ENCODE measurements at regions of chr5 and their contacts with region 1.

Region 1: DNA sequence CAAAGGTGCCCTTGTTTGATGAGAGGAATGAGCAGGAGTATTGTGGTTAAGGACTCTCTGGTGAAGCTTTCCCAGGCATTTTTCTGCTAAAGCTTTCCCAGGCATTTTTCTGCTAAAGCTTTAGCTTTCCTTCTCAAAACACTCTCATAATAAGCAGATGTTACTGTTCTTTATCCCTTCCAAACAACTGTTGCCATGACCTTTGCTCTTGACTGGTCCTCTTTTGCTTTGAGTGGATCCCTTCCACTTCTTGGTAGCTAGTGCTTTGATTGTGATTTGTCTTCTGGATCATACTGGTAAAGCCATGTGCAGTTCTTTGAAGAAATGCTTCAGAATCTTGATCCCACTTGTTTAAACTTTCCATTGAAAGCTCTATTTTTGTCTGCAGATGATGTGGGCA is 85.8 kb downstream of the GPBP1 start:
- DNase-seq: no peak
- H3K4me3 Mint-ChIP-seq: no peak overlapping the region
- H3K27ac Mint-ChIP-seq: peak overlapping the region; percentile 51
- H3K4me1 Mint-ChIP-seq: peaks cover 26% of the 10 kb centered on the region
- H3K27me3 Mint-ChIP-seq: no peaks in the 10 kb centered on the region

Region 2: GRCh38 chr5:56964173-56964572 is 295.5 kb before region 1 on chr5:
- intact Hi-C with region 1: no loop called
- DNase-seq: no peak
- H3K4me3 Mint-ChIP-seq: no peak overlapping the region
- H3K27ac Mint-ChIP-seq: no peak overlapping the region
- H3K4me1 Mint-ChIP-seq: no peaks in the 10 kb centered on the region
- H3K27me3 Mint-ChIP-seq: peaks cover 59% of the 10 kb centered on the region

Region 3: DNA sequence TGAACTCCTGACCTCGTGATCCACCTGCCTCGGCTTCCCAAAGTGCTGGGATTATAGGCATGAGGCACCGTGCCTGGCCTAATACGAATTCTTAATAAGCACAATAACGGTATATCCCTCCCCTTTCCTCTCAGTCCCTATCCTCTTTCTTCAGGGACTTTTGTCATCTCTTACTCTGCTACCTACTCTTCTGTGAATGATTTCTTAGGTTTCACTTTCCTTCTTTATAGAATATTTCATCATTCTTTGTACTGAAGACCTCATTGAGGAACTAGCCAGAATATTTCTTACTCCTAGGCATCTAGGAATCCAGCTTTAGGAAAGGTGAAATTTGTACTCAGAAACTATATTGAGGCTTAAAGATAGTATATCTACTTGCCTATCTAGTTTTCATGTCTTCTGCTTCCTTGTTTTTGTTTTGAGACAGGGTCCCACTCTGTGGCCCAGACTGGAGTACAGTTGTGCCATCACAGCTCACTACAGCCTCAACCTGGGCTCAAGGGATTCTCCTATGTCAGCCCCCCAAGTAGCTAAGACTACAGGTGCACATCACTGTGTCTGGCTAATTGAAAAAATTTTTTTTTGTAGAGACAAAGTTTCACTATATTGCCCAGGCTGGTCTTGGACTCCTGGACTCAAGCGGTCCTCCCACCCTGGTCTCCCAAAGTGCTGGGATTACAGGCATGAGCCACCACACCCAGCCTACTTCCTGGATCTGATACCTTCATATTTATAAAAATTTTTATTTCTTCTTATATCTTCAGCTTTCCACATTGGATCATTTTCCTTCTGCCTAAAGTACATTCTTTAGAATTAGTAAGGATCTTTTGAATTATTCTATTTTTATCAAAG is 16.2 kb before region 1 on chr5:
- intact Hi-C with region 1: loop called (anchors 2 kb)
- DNase-seq: no peak
- H3K4me3 Mint-ChIP-seq: no peak overlapping the region
- H3K27ac Mint-ChIP-seq: peak overlapping the region; percentile 35
- H3K4me1 Mint-ChIP-seq: peaks cover 40% of the 10 kb centered on the region
- H3K27me3 Mint-ChIP-seq: no peaks in the 10 kb centered on the region

Measured in activated T-helper 1 cell treated with anti-CD3 and anti-CD28 coated beads, Interleukin-12 subunit alpha, Interleukin-12 subunit beta, Interleukin-2, Interleukin-4 antibody, amounts not matched to agents 30 ng/mL and 10 ng/mL and 1 ng/mL, durations not matched to agents 14 hours and 24 hours and 36 hours (primary cell).